ENCODE measurements at regions of chr11 and their contacts with region 1.

Region 1: DNA sequence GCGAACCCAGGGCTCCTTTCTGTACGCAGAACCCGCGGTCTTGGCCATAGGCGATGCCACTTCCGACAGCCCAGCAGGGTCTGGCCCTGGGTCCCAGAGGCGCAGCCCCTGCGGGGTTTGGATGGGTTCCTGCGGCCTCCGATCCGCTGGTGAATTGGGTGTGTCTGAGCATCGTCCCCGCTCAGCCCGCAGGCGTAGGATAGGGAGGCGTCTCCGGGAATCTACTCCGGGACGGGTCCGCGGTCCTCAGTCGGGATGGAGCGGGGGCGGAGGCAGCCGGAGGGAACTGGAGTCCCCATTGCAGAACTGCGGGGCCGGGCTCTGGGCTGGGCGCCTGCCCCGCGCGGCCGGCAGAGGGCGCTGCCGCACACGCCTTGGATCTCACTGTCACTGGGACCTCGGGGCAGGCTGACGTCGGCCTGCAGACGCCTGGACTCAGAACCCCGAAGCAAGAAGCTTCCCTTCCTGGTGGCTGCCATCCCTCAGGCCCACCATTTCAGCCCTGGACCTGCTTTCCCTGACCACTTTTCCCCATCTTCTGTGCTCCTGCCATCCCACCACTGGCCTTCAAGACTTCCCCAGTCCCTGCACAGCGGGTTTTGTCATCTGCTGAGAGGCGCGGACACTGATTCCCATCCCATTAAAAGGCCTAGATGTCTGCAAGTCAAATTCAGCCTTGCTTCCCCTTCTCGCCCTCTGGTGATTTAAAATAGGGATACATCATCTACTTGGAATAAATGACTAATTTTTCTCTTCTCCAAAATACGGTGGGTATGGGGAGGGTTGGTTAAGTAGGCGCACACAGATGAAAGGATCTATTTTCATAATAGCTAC is 38.3 kb upstream of the CREB3L1 start:
- DNase-seq: peak; percentile 86 to 94 (median 90)
- H3K4me3 ChIP-seq: peak overlapping the region in 2 of 4 donors; percentile 20 to 59
- H3K27ac ChIP-seq: peak overlapping the region; percentile 89 to 96 (median 90)
- H3K4me1 ChIP-seq: peaks cover 17 to 42% of the 10 kb centered on the region in 2 donors
- H3K27me3 ChIP-seq: no peaks in the 10 kb centered on the region
- CTCF ChIP-seq: peak; percentile 94 to 100 (median 99)
- POLR2A ChIP-seq: no peak

Region 2: DNA sequence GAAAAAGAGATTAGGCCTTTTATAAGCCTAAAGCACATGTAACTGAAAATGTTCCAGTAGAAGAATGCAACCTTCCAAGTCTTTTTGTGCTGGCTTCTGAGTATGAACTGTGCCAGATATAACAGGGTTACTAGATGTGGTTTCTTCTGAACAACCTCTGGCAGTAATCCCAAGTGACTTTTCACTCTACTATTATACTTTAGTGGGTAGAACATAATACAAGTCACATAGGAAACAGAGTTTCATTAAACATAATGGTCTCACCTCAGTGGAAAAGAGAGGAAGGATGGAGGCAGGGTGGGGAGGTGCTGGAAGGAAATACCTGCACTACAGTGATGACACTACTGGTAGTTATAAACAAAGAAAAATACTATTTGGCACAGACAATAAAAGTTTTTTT is 199.2 kb before region 1 on chr11:
- intact Hi-C with region 1: no loop called
- DNase-seq: no peak
- H3K4me3 ChIP-seq: no peak overlapping the region
- H3K27ac ChIP-seq: no peak overlapping the region
- H3K4me1 ChIP-seq: peaks cover 8 to 17% of the 10 kb centered on the region in 2 donors
- H3K27me3 ChIP-seq: no peaks in the 10 kb centered on the region
- CTCF ChIP-seq: no peak
- POLR2A ChIP-seq: no peak

Region 3: GRCh38 chr11:46121724-46122477 is 117.3 kb before region 1 on chr11:
- intact Hi-C with region 1: loop called (anchors 5 to 10 kb)
- DNase-seq: peak; percentile 79 to 92 (median 81)
- H3K4me3 ChIP-seq: peak overlapping the region; percentile 51 to 93 (median 68)
- H3K27ac ChIP-seq: peak overlapping the region; percentile 64 to 99 (median 77)
- H3K4me1 ChIP-seq: peaks cover 21 to 29% of the 10 kb centered on the region in 2 donors
- H3K27me3 ChIP-seq: no peaks in the 10 kb centered on the region
- CTCF ChIP-seq: no peak
- POLR2A ChIP-seq: peak in 1 of 2 donors; percentile 61

Region 4: GRCh38 chr11:46127150-46127638 is 112.0 kb before region 1 on chr11:
- intact Hi-C with region 1: loop called (anchors 5 to 10 kb)
- DNase-seq: peak in 4 of 7 donors; percentile 19 to 50 (median 36)
- H3K4me3 ChIP-seq: no peak overlapping the region
- H3K27ac ChIP-seq: no peak overlapping the region
- H3K4me1 ChIP-seq: peaks cover 8 to 10% of the 10 kb centered on the region in 2 donors
- H3K27me3 ChIP-seq: no peaks in the 10 kb centered on the region
- CTCF ChIP-seq: peak in 2 of 6 experiments; percentile 14 to 28
- POLR2A ChIP-seq: no peak

Region 5: GRCh38 chr11:46176402-46176801 is 62.8 kb before region 1 on chr11:
- intact Hi-C with region 1: no loop called
- DNase-seq: no peak
- H3K4me3 ChIP-seq: no peak overlapping the region
- H3K27ac ChIP-seq: no peak overlapping the region
- H3K4me1 ChIP-seq: no peaks in the 10 kb centered on the region
- H3K27me3 ChIP-seq: no peaks in the 10 kb centered on the region
- CTCF ChIP-seq: no peak
- POLR2A ChIP-seq: no peak

Region 6: DNA sequence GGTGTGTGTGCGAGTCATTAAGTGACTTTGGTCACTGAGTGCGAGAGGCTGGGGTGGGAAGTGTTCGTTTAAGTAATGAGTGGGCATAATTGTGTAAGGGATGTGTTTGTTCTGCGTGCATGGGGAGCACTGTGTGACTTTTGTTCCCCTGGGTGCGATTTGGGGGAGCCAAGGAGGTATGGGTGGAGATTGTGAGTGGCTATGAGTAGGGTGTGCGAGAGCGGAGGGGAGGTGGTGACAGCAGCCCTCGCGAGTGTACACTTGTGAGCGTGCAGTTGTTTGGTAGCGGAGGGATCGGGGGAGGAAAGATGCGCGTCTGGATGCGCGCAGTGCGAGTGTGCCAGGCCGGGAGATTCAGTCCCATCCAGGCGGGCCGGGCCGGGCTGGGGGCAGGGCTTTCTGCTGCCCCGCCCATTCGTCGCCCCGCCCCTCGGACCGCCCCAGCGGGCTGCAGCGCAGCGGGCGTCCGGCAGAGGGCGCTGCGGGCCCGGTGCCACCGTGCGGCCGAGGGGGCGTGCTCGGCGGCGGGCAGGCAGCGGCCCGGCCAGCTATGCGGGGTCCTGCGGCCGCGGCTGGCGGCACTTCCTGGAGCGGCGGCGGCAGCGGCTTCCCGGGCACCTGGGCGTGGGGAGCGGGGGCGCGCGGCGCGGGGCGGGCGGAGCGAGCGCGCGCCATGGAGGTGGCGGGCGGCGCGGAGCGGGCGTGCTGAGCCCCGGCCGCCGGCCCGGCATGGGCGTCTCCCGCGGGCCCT is 107.9 kb after region 1 on chr11 and contains the start of gene DGKZ:
- intact Hi-C with region 1: no loop called
- DNase-seq: peak; percentile 81 to 89 (median 84)
- H3K4me3 ChIP-seq: peak within 1 kb of the TSS; percentile 62 to 76 (median 68)
- H3K27ac ChIP-seq: peak within 1 kb of the TSS in 2 of 5 donors; percentile 13 to 80
- H3K4me1 ChIP-seq: peaks cover 20 to 36% of the 10 kb centered on the region in 2 donors
- H3K27me3 ChIP-seq: no peaks in the 10 kb centered on the region
- CTCF ChIP-seq: peak in 5 of 6 experiments; percentile 11 to 99 (median 83)
- POLR2A ChIP-seq: peak; percentile 9 to 45
- total RNA-seq, gene DGKZ: 25.3 to 63.4 (median 43.6) TPM

Region 7: GRCh38 chr11:46845740-46846509 is 606.7 kb after region 1 on chr11 and contains the start of gene CKAP5:
- intact Hi-C with region 1: no loop called
- DNase-seq: peak; percentile 91 to 98 (median 94)
- H3K4me3 ChIP-seq: peak within 1 kb of the TSS; percentile 56 to 100 (median 70)
- H3K27ac ChIP-seq: peak within 1 kb of the TSS in 4 of 5 donors; percentile 61 to 96 (median 84)
- H3K4me1 ChIP-seq: peaks cover 10 to 19% of the 10 kb centered on the region in 2 donors
- H3K27me3 ChIP-seq: no peaks in the 10 kb centered on the region
- CTCF ChIP-seq: no peak
- POLR2A ChIP-seq: peak; percentile 55 to 64
- total RNA-seq, gene CKAP5: 71.4 to 174 (median 102) TPM

Measured in adrenal gland (tissue), 19 donors.